ENCODE measurements at regions of chr2 and their contacts with region 1.

Region 1: DNA sequence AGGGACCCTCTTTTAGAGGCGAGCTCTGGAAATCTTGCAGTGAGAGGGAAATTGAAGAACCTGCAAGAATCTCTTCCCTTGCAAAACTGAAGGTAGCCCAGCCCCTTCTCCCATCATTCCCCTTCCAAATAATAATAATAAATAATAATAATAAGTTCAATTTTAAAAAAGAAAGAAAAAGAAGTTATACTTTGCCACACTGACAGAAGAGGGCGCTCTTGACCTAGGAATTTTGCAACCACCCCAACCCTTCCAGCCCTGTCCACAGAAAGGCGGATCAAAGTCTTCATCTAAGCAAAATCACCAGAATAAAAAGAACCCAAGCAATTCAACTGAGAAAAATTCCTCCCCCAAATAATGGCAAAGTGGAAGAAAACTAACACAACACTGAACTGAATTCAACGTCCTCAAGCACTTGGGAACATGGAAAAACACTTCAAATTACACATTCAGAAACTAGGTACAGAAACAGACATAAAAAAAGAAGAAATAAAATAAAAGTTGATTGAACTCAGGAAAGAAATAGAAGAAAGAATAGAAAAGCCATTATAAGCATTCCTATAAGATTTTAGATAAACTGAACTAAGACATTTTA is 98.9 kb upstream of the GLS start:
- DNase-seq: peak in 1 of 2 donors; percentile 54
- ATAC-seq: peak in 5 of 8 donors; percentile 47 to 68 (median 56)
- H3K4me3 ChIP-seq: no peak overlapping the region
- H3K27ac ChIP-seq: no peak overlapping the region
- H3K4me1 ChIP-seq: peaks cover 0 to 4% (median 0%) of the 10 kb centered on the region in 9 donors
- H3K27me3 ChIP-seq: peaks cover 0 to 3% (median 0%) of the 10 kb centered on the region in 7 donors
- CTCF ChIP-seq: peak; percentile 37 to 77 (median 69)

Region 2: GRCh38 chr2:190382851-190383250 is 398.9 kb before region 1 on chr2:
- intact Hi-C with region 1: loop called in 1 of 10 experiments (anchors 10 kb)
- DNase-seq: peak in 1 of 2 donors; percentile 26
- ATAC-seq: peak in 5 of 8 donors; percentile 50 to 76 (median 67)
- H3K4me3 ChIP-seq: no peak overlapping the region
- H3K27ac ChIP-seq: no peak overlapping the region
- H3K4me1 ChIP-seq: peaks cover 0 to 11% (median 0%) of the 10 kb centered on the region in 9 donors
- H3K27me3 ChIP-seq: no peaks in the 10 kb centered on the region
- CTCF ChIP-seq: peak; percentile 34 to 73 (median 58)

Region 3: GRCh38 chr2:190996338-190996946 is 214.7 kb after region 1 on chr2:
- intact Hi-C with region 1: loop called in 1 of 10 experiments (anchors 10 kb)
- DNase-seq: no peak
- ATAC-seq: peak in 6 of 8 donors; percentile 41 to 78 (median 56)
- H3K4me3 ChIP-seq: no peak overlapping the region
- H3K27ac ChIP-seq: no peak overlapping the region
- H3K4me1 ChIP-seq: peaks cover 0 to 24% (median 0%) of the 10 kb centered on the region in 9 donors
- H3K27me3 ChIP-seq: no peaks in the 10 kb centered on the region
- CTCF ChIP-seq: peak; percentile 24 to 64 (median 60)

Region 4: GRCh38 chr2:191030521-191031154 is 248.9 kb after region 1 on chr2:
- intact Hi-C with region 1: loop called in 9 of 10 experiments (anchors 1 to 10 kb)
- DNase-seq: no peak
- ATAC-seq: peak in 6 of 8 donors; percentile 49 to 76 (median 66)
- H3K4me3 ChIP-seq: no peak overlapping the region
- H3K27ac ChIP-seq: peak overlapping the region in 1 of 10 donors; percentile 52
- H3K4me1 ChIP-seq: peaks cover 0 to 61% (median 6%) of the 10 kb centered on the region in 9 donors
- H3K27me3 ChIP-seq: peaks cover 0 to 3% (median 0%) of the 10 kb centered on the region in 7 donors
- CTCF ChIP-seq: peak; percentile 21 to 72 (median 62)

Region 5: GRCh38 chr2:191165176-191165643 is 383.5 kb after region 1 on chr2:
- intact Hi-C with region 1: loop called in 1 of 10 experiments (anchors 10 kb)
- DNase-seq: no peak
- ATAC-seq: peak; percentile 75 to 90 (median 82)
- H3K4me3 ChIP-seq: no peak overlapping the region
- H3K27ac ChIP-seq: peak overlapping the region in 4 of 10 donors; percentile 36 to 61 (median 58)
- H3K4me1 ChIP-seq: peaks cover 0 to 34% (median 23%) of the 10 kb centered on the region in 9 donors
- H3K27me3 ChIP-seq: no peaks in the 10 kb centered on the region
- CTCF ChIP-seq: peak; percentile 47 to 84 (median 72)

Region 6: DNA sequence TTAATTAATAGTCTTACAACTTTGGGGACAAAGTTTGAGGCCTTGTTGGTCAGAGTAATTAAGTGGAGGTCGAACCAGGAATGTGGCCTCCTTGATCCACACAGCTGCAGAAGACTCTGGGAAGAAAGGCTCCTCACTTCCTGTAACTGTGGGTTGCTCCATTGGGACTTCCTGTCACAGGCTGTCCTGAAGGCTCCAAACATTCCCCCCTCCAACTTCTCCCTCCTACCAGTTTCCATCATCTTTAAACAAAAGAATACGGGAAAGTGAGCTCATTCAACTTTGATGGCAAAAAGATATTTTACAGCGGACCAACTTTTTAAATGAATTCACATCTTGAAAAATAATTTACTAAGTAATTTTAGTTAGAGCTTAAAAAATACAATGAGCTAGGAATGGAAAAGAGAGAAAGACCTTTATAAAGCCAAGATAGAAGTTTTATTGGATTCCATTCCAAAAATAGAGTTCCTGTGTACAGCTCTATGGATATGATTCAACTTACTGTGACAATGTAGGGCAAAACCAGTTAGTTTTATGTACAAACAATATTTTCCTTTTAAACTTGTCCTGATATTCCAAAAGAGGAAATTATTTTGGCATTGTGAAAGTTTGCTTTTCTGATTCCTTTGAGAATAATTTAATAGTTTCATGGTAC is 684.2 kb after region 1 on chr2:
- intact Hi-C with region 1: no loop called
- DNase-seq: peak in 1 of 2 donors; percentile 56
- ATAC-seq: peak; percentile 66 to 96 (median 88)
- H3K4me3 ChIP-seq: no peak overlapping the region
- H3K27ac ChIP-seq: peak overlapping the region in 9 of 10 donors; percentile 12 to 77 (median 57)
- H3K4me1 ChIP-seq: peaks cover 0 to 27% (median 12%) of the 10 kb centered on the region in 9 donors
- H3K27me3 ChIP-seq: no peaks in the 10 kb centered on the region
- CTCF ChIP-seq: no peak

Measured in heart right ventricle (tissue), 16 donors.